AG04449 (cell line): ENCODE measurements at regions of chr17 and their contacts with region 1.

Region 1: GRCh38 chr17:29148790-29149430 is 31.3 kb downstream of the MYO18A start:
- DNase-seq: no peak
- H3K4me3 ChIP-seq: peak overlapping the region; percentile 54
- CTCF ChIP-seq: peak; percentile 96

Region 2: DNA sequence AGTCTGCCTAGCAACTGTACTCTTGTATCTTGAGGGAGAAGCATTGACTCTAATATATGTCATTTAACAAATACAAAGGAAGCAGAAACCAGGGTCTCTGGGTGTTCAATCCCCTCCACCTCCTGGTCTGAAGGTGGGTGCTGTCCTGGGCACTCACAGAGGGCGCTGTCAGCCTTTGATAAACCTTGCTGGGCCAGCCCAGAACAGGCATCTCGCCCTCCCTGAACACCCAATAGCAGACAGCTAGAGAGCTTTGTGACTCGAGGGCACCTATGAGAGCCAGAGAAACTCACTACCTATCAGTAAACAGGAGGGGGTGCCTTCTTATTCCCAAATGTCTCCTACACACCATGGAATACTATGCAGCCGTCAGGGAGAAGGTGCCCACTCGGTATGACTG is 112.3 kb before region 1 on chr17:
- CTCF ChIA-PET with region 1: no interaction called
- POLR2A ChIA-PET with region 1: no interaction called
- DNase-seq: no peak
- H3K4me3 ChIP-seq: no peak overlapping the region
- CTCF ChIP-seq: no peak

Region 3: DNA sequence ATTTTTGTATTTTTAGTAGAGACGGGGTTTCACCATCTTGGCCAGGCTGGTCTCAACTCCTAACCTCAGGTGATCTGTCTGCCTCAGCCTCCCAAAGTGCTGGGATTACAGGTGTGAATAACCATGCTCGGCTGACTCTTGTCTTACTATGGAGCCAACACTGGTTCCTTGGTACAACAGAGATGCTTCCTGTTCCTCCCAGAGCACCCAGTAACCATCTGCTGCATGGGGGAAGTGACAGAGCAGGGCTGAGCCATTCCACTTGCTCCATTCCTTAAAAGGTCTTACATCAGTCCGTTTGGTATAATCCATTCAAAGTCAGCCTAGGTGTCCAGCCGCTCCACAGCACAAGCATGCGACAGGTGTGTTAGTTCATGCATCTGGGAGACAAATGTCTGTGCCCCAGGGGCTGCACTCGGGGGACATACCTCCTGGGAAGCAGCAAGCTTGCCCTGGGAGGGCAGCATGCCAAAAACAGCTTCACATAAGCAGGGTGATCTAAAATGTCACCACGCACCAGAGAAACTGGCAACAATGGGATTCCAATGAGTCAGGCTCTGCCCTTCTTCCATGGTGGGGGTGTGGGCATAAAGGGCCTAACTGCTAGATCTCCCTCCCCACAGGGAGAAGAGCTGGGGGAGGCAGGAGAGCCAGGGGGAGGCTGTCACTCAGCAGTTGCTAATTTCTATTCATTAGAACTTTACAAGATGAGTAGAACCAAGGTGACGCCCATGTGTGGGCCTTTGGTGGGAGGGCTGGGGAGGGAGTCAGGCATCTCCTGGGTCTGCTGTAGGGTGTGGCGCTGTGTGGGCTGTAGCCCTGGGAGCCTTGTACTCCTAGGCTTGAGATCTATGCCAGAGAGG is 70.5 kb before region 1 on chr17:
- CTCF ChIA-PET with region 1: no interaction called
- POLR2A ChIA-PET with region 1: no interaction called
- DNase-seq: no peak
- H3K4me3 ChIP-seq: no peak overlapping the region
- CTCF ChIP-seq: no peak

Region 4: GRCh38 chr17:29124117-29124924 is 24.6 kb before region 1 on chr17:
- CTCF ChIA-PET with region 1: interaction called, 138 read pairs
- POLR2A ChIA-PET with region 1: interaction called, 5 read pairs
- DNase-seq: no peak
- H3K4me3 ChIP-seq: no peak overlapping the region
- CTCF ChIP-seq: peak; percentile 72

Region 5: DNA sequence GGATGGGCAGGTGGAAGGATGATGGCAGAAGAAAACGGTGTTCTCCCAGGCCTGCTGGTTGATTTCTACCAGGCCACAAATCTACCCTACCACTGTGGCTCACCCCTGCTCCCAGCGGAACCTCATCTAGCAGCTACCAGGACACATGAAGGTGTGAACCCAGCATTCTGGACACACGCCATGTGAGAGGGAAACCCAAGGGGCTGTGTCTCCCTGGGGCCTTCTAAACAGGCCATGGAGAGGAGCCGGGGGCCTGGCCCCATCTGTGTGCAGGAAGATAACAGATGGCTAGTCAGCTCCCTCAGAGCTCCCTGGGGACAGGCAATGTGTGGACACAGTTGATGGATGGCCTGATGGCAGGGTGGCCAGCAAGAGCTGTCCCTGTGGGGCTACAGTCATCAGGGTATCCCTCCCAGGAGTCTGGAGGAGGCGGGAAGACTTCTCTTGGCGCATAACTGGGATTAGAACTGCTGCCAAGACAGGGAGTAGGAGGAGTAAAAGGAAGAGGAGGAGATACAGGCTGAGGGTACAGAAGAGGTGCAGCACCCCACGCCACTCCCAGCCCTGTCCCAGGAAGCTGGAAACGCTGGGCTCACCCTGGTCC is 13.9 kb after region 1 on chr17:
- CTCF ChIA-PET with region 1: interaction called, 51 read pairs
- POLR2A ChIA-PET with region 1: no interaction called
- DNase-seq: no peak
- H3K4me3 ChIP-seq: no peak overlapping the region
- CTCF ChIP-seq: no peak

Region 6: GRCh38 chr17:29212681-29213121 is 63.8 kb after region 1 on chr17:
- CTCF ChIA-PET with region 1: interaction called, 454 read pairs
- POLR2A ChIA-PET with region 1: no interaction called
- DNase-seq: no peak
- H3K4me3 ChIP-seq: no peak overlapping the region
- CTCF ChIP-seq: no peak

Region 7: GRCh38 chr17:29225396-29225795 is 76.5 kb after region 1 on chr17:
- CTCF ChIA-PET with region 1: interaction called, 454 read pairs
- POLR2A ChIA-PET with region 1: no interaction called
- DNase-seq: no peak
- H3K4me3 ChIP-seq: no peak overlapping the region
- CTCF ChIP-seq: no peak

Region 8: GRCh38 chr17:29252101-29252866 is 103.4 kb after region 1 on chr17:
- CTCF ChIA-PET with region 1: interaction called, 39 read pairs
- POLR2A ChIA-PET with region 1: interaction called, 3 read pairs
- DNase-seq: no peak
- H3K4me3 ChIP-seq: no peak overlapping the region
- CTCF ChIP-seq: no peak

Region 9: GRCh38 chr17:29347831-29348629 is 199.1 kb after region 1 on chr17:
- CTCF ChIA-PET with region 1: no interaction called
- POLR2A ChIA-PET with region 1: no interaction called
- DNase-seq: no peak
- H3K4me3 ChIP-seq: no peak overlapping the region
- CTCF ChIP-seq: no peak